ENCODE measurements at regions of chr17 and their contacts with region 1.

Region 1: GRCh38 chr17:40499551-40500174 is 1.8 kb downstream of the TNS4 start:
- DNase-seq: peak; percentile 100
- H3K4me3 Mint-ChIP-seq: peak overlapping the region; percentile 33
- H3K27ac Mint-ChIP-seq: no peak overlapping the region
- H3K4me1 Mint-ChIP-seq: peaks cover 20% of the 10 kb centered on the region
- H3K27me3 Mint-ChIP-seq: peaks cover 82% of the 10 kb centered on the region
- CTCF ChIP-seq: no peak

Region 2: DNA sequence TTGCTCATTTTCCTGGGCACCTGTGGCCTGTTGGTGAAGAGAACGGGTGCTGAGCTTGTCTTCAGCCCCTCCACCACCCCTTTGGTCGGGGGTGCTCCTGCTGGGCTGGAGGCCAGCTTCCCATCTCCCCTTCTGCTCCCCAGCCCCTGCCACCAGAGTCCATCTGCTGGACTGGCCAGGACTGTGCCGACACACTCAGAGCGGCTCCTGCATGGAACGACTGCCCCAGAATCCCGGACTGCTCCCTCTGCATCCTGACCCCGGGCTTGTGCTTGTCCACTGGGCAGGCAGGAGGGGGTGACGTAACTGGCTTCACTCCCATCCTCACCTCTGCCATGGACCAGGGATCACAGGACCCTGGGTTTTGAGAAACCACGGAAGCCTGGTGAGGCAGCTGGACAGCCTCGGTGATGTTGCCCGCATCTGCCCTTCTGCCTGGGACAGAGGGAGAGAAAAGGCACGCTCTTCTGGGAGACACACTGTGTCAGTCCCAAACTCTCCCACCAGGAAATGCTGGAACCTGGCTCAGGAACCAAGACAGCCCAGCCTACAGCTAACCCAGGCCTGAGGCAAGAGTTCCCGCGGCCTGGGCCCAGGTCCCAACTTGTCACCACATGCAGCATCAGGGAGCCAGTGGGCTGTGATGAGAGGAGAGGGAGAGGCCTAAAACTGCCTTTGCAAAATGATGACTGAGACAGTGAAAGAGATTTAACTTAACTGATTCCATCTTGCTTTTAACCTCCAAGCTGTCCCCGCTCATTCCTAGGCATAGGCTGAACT is 552.9 kb before region 1 on chr17:
- CTCF ChIA-PET with region 1: interaction called, 10 read pairs
- intact Hi-C with region 1: loop called (anchors 2 kb)
- DNase-seq: peak; percentile 86
- H3K4me3 Mint-ChIP-seq: no peak overlapping the region
- H3K27ac Mint-ChIP-seq: no peak overlapping the region
- H3K4me1 Mint-ChIP-seq: peaks cover 39% of the 10 kb centered on the region
- H3K27me3 Mint-ChIP-seq: peaks cover 57% of the 10 kb centered on the region
- CTCF ChIP-seq: no peak

Region 3: GRCh38 chr17:40338058-40338457 is 161.6 kb before region 1 on chr17:
- CTCF ChIA-PET with region 1: no interaction called
- intact Hi-C with region 1: no loop called
- DNase-seq: no peak
- H3K4me3 Mint-ChIP-seq: no peak overlapping the region
- H3K27ac Mint-ChIP-seq: no peak overlapping the region
- H3K4me1 Mint-ChIP-seq: peaks cover 44% of the 10 kb centered on the region
- H3K27me3 Mint-ChIP-seq: no peaks in the 10 kb centered on the region
- CTCF ChIP-seq: no peak

Region 4: DNA sequence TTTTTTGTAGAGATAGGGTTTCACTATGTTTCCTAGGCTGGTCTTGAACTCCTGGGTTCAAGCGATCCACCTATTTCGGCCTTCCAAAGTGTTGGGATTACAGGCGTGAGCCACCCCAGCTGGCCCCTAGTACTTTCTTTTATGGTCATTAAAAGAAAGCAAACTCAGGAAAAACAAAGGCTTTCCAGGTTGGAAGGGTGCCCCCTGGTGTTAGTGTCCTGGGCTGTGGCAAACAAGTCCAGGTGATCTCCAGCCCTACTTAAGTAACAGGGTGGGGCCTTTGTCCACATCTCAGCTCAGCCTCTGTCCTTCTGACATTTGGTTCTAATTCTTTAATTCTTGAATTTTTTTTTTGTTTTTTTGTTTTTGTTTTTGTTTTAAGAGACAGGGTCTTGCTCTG is 49.5 kb before region 1 on chr17:
- CTCF ChIA-PET with region 1: interaction called, 4,142 read pairs
- intact Hi-C with region 1: no loop called
- DNase-seq: peak; percentile 100
- H3K4me3 Mint-ChIP-seq: no peak overlapping the region
- H3K27ac Mint-ChIP-seq: no peak overlapping the region
- H3K4me1 Mint-ChIP-seq: peaks cover 48% of the 10 kb centered on the region
- H3K27me3 Mint-ChIP-seq: peaks cover 17% of the 10 kb centered on the region
- CTCF ChIP-seq: no peak

Region 5: GRCh38 chr17:40510328-40510648 is 10.6 kb after region 1 on chr17:
- CTCF ChIA-PET with region 1: interaction called, 392 read pairs
- intact Hi-C with region 1: loop called (anchors 1 kb)
- DNase-seq: peak; percentile 88
- H3K4me3 Mint-ChIP-seq: no peak overlapping the region
- H3K27ac Mint-ChIP-seq: no peak overlapping the region
- H3K4me1 Mint-ChIP-seq: peaks cover 41% of the 10 kb centered on the region
- H3K27me3 Mint-ChIP-seq: peaks cover 61% of the 10 kb centered on the region
- CTCF ChIP-seq: no peak

Region 6: DNA sequence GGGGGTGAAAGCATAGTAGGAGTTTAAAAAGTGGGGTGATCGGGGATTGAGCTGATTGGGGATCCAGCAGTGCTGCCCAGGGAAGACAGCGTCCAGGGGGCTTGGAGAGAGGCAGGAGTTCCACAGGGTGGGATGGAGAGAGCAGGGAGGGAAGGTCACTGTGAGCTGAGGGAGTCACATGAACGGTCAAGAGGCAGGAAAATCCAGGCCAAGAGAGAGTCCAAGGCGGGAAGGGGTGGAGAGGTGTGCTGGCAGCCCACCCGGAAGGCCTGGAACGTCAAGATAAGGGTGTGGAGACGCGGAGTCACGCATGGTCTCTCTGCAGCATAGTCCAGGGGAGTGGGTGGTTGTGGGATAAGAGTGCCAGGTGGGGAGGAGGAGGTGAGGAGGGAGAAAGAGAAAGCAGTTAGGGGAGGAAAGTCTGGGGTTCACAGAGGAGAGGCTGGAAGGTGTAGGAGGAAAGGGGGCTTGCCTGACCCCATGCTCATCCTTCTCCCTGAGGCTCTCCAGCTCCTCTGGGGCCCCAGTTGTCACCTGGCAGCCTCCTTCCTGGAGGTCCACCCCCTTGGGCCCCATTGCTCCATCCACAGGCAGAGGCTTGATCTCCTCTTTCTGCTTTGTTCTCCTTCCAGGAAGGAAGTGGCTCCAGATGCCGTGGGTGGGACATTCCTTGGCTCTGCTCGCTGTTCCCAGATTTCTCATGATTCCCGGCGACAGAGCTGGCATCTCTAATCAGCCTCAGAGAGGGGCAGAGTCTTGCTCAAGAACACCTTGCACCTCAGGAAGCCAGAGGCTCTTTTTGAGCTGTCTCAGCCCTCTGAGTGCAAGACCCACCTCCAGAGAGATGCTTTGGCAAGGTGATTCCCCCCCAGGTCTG is 36.9 kb after region 1 on chr17:
- CTCF ChIA-PET with region 1: interaction called, 262 read pairs
- intact Hi-C with region 1: no loop called
- DNase-seq: peak; percentile 68
- H3K4me3 Mint-ChIP-seq: no peak overlapping the region
- H3K27ac Mint-ChIP-seq: no peak overlapping the region
- H3K4me1 Mint-ChIP-seq: peaks cover 24% of the 10 kb centered on the region
- H3K27me3 Mint-ChIP-seq: peaks cover 85% of the 10 kb centered on the region
- CTCF ChIP-seq: no peak

Region 7: DNA sequence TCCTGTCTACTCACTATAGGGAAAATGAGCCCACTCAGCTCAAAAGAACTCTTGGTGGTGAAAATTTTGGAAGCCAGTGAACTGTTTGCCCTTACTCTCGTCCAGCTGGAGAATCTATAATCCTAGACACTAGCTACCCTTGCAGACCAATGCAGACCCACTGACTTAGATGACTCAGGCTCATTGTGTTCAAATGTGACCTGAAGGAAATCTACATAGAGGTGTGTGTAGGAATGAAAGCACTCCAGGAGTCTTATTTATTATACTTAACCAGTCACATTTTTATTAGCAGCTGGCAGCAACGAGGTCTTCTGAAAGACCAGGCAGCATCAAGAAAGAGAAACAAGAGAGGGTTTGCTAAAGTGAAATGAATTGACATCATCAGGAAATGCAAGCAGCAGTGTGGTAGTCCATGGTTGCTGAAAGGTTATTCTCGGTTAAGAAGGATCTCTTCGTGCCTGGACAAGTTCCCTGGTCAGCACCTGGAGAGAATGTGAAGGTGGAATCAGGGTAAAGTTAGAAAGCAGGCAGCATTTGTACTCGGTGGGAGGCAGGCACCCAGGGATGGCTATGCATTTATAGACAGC is 801.6 kb after region 1 on chr17:
- CTCF ChIA-PET with region 1: no interaction called
- intact Hi-C with region 1: no loop called
- DNase-seq: no peak
- H3K4me3 Mint-ChIP-seq: no peak overlapping the region
- H3K27ac Mint-ChIP-seq: no peak overlapping the region
- H3K4me1 Mint-ChIP-seq: no peaks in the 10 kb centered on the region
- H3K27me3 Mint-ChIP-seq: peaks cover 1% of the 10 kb centered on the region
- CTCF ChIP-seq: no peak